ENCODE measurements at regions of chr5 and their contacts with region 1.

Region 1: DNA sequence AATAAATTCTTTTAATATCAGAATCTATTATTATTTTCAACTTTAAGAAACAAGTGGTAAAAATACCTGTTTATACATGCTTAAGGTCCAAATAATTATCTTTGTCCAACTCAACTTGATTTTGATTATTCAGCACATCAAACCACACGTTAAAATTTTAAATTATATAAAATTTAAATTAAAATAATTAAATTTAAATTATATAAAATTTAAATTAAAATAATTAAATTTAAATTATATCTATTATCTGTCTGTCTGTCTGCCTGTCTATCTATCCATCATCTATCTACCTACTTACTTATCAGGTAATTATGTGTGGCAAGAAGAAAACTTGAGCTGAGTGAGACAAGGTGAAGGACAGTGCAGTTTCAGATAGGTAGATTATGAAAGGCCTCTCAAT is 605.3 kb upstream of the RIOK2 start:
- DNase-seq: no peak
- H3K4me3 ChIP-seq: no peak overlapping the region
- H3K27ac ChIP-seq: no peak overlapping the region
- H3K4me1 ChIP-seq: no peaks in the 10 kb centered on the region
- H3K27me3 ChIP-seq: no peaks in the 10 kb centered on the region
- CTCF ChIP-seq: no peak
- POLR2A ChIP-seq: no peak

Region 2: GRCh38 chr5:97276474-97277120 is 511.8 kb before region 1 on chr5:
- intact Hi-C with region 1: loop called (anchors 5 kb)
- DNase-seq: no peak
- H3K4me3 ChIP-seq: no peak overlapping the region
- H3K27ac ChIP-seq: no peak overlapping the region
- H3K4me1 ChIP-seq: no peaks in the 10 kb centered on the region
- H3K27me3 ChIP-seq: no peaks in the 10 kb centered on the region
- CTCF ChIP-seq: no peak
- POLR2A ChIP-seq: no peak

Region 3: GRCh38 chr5:97745817-97746216 is 42.6 kb before region 1 on chr5:
- intact Hi-C with region 1: no loop called
- DNase-seq: no peak
- H3K4me3 ChIP-seq: no peak overlapping the region
- H3K27ac ChIP-seq: no peak overlapping the region
- H3K4me1 ChIP-seq: no peaks in the 10 kb centered on the region
- H3K27me3 ChIP-seq: no peaks in the 10 kb centered on the region
- CTCF ChIP-seq: no peak
- POLR2A ChIP-seq: no peak

Region 4: DNA sequence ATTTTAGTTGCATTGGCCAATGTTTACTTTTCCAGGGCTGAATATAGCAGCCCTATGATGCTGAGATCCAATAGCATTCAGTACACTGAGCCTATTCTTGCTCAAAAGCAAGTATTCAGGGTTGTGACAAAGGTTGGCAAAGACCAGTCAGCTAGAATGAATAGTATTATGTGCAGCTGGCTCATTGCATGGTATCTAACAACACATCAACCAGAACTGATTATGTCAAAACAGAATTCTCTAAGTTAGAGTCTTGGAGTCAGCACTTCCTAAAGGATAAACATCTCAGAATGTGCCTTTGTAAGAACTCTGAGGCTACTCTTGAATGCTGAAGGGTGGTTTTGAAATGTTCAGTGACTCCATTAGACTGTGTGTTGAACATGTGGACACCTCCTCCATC is 210.6 kb after region 1 on chr5:
- intact Hi-C with region 1: no loop called
- DNase-seq: no peak
- H3K4me3 ChIP-seq: no peak overlapping the region
- H3K27ac ChIP-seq: no peak overlapping the region
- H3K4me1 ChIP-seq: no peaks in the 10 kb centered on the region
- H3K27me3 ChIP-seq: no peaks in the 10 kb centered on the region
- CTCF ChIP-seq: no peak
- POLR2A ChIP-seq: no peak